Right lobe of liver (tissue), 6 donors: ENCODE measurements at regions of chr2 and their contacts with region 1.

Region 1: DNA sequence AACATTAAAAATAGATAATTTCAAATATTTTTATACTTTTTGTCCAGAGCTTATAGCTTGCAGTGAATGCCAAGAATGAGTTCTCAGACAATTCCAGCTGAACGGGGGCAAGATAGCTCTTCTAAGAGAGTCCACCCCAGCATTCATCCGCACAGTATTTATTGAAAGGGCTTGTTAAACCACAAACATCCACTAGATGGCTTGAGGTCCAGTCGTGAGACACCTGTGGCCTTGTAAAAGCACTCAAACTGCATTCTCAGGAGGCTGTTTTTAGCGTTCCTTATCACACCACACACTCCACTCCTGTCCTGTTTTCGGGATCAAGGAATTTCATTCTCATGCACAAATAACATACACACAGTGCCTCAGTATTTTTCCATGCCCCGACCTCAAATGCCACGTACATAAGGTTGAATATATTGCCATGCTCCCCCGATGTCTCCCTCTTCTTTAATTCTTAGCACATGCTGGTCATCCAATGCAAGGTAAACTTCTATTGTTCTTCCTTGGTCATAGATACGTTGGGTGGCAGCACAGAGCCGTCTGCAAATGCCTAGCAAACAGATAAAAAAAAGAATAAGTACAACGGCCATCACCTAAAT is 47.4 kb downstream of the DNAJC10 start:
- DNase-seq: no peak
- ATAC-seq: peak; percentile 55 to 60 (median 60)
- H3K4me3 ChIP-seq: no peak overlapping the region
- H3K27ac ChIP-seq: no peak overlapping the region
- H3K4me1 ChIP-seq: peaks cover 0 to 4% (median 0%) of the 10 kb centered on the region in 4 donors
- H3K27me3 ChIP-seq: no peaks in the 10 kb centered on the region
- CTCF ChIP-seq: peak; percentile 44 to 57 (median 52)
- POLR2A ChIP-seq: no peak

Region 2: GRCh38 chr2:182715896-182716668 is 47.3 kb before region 1 on chr2 and contains the start of gene DNAJC10:
- intact Hi-C with region 1: no loop called
- DNase-seq: peak; percentile 91 to 92 (median 92)
- ATAC-seq: peak; percentile 96 to 99 (median 97)
- H3K4me3 ChIP-seq: peak within 1 kb of the TSS; percentile 78 to 92 (median 79)
- H3K27ac ChIP-seq: peak within 1 kb of the TSS; percentile 27 to 54 (median 53)
- H3K4me1 ChIP-seq: peaks cover 0 to 6% (median 0%) of the 10 kb centered on the region in 4 donors
- H3K27me3 ChIP-seq: no peaks in the 10 kb centered on the region
- CTCF ChIP-seq: no peak
- POLR2A ChIP-seq: peak; percentile 61
- total RNA-seq, gene DNAJC10: 26.1 to 37.7 (median 33.0) TPM

Region 3: GRCh38 chr2:182915369-182916326 is 152.2 kb after region 1 on chr2:
- intact Hi-C with region 1: no loop called
- DNase-seq: no peak
- ATAC-seq: peak; percentile 41 to 64 (median 56)
- H3K4me3 ChIP-seq: peak overlapping the region in 2 of 3 donors; percentile 46 to 50
- H3K27ac ChIP-seq: peak overlapping the region in 1 of 3 donors; percentile 72
- H3K4me1 ChIP-seq: peaks cover 0 to 35% (median 3%) of the 10 kb centered on the region in 4 donors
- H3K27me3 ChIP-seq: no peaks in the 10 kb centered on the region
- CTCF ChIP-seq: no peak
- POLR2A ChIP-seq: no peak

Region 4: DNA sequence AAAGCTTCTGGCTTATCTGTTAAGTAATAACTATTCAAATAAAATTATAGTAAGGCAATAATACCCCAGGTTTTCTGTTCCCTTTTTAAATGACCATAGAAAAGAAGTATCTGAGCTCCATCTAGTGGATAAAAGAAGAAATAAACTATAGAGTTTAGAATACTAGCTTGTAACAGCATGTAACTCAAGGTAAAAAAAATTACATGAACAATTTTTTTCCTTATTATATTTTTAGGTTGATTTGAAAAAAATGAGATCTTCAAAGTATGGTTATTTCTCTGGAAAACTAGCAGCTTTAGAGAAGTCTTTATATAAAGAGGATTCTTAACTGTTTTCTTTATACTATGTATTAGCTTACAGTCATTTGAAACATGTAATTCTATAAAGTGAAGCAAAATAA is 216.7 kb after region 1 on chr2:
- intact Hi-C with region 1: loop called in 1 of 2 experiments (anchors 10 kb)
- DNase-seq: no peak
- ATAC-seq: peak; percentile 63 to 82 (median 78)
- H3K4me3 ChIP-seq: no peak overlapping the region
- H3K27ac ChIP-seq: no peak overlapping the region
- H3K4me1 ChIP-seq: no peaks in the 10 kb centered on the region
- H3K27me3 ChIP-seq: no peaks in the 10 kb centered on the region
- CTCF ChIP-seq: peak; percentile 58 to 67 (median 63)
- POLR2A ChIP-seq: no peak